Activated CD4-positive, alpha-beta memory T cell treated with anti-CD3 and anti-CD28 coated beads, Interleukin-2, amount 10 ng/mL, durations not matched to agents 7 days and 5 days (primary cell): ENCODE measurements at regions of chr4 and their contacts with region 1.

Region 1: DNA sequence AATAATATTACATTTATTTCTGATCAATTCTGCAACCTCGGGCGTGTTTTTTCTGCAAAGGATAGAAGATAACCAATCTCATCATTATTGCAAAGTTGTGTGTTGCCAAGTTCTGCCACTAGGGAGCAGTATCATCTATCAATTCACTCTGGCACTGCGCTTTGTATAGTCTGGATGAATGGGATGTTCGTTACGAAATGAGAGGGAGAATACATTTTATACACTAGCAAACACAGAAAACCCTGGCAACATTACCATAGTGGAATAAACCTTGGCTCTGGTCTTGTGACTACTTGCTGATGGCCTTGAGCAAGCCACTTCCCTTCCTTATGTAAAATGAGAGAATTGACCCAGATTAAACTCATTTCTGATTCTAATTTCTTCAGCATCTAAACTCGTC is 97.5 kb upstream of the ZNF518B start:
- DNase-seq: peak; percentile 35
- H3K4me3 Mint-ChIP-seq: no peak overlapping the region
- H3K27ac Mint-ChIP-seq: no peak overlapping the region
- H3K4me1 Mint-ChIP-seq: no peaks in the 10 kb centered on the region
- H3K27me3 Mint-ChIP-seq: peaks cover 5% of the 10 kb centered on the region

Region 2: GRCh38 chr4:10535912-10536311 is 18.8 kb before region 1 on chr4:
- CTCF ChIA-PET with region 1: interaction called, 17 read pairs
- POLR2A ChIA-PET with region 1: no interaction called
- DNase-seq: no peak
- H3K4me3 Mint-ChIP-seq: no peak overlapping the region
- H3K27ac Mint-ChIP-seq: no peak overlapping the region
- H3K4me1 Mint-ChIP-seq: no peaks in the 10 kb centered on the region
- H3K27me3 Mint-ChIP-seq: peaks cover 3% of the 10 kb centered on the region